WTC11 (cell line): ENCODE measurements at regions of chr4 and their contacts with region 1.

Region 1: DNA sequence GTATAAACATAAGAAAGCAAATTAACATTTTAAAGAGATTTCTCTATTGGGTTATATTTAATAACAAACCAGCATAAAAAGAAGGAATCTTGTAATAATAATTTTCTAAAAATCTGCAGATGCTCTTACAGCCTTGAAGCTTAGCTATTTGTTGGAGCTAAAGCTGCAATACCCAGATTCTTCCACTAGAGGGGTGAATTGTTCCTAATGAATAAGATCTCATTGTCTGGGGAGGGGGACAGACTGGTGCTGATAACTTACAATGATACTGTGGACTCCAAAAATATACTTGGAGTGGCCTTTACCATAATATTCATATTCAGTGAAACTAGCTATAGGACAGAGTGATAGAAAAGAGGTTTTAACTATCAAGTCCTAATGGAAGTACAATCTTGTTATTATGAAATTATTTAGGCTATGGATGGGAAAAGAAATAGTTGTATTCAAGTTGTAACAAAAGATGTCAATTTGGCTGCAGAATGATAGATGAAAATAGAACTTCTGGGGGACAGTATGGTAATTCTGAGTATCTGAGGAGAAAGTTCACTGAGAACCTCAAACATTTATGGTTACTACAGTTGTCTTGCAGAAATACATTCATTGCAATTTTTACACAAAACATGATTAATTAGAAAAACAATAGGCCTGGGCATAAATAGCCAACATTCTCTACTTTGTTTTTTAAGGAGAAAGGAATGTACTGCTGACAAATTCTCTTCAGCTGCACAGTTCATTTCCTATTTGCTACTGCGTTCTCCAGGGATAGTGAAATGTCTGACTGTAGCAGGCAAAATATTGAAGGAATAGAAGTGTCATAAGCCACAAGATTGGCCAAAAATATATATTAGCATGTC is 443.3 kb downstream of the GBA3 start:
- DNase-seq: no peak
- ATAC-seq: peak; percentile 82
- H3K4me3 Mint-ChIP-seq: no peak overlapping the region
- H3K27ac Mint-ChIP-seq: no peak overlapping the region
- H3K4me1 Mint-ChIP-seq: peaks cover 21% of the 10 kb centered on the region
- H3K27me3 Mint-ChIP-seq: no peaks in the 10 kb centered on the region
- CTCF ChIP-seq: peak; percentile 77

Region 2: GRCh38 chr4:22941688-22942375 is 194.2 kb before region 1 on chr4:
- CTCF ChIA-PET with region 1: no interaction called
- POLR2A ChIA-PET with region 1: no interaction called
- DNase-seq: no peak
- ATAC-seq: no peak
- H3K4me3 Mint-ChIP-seq: no peak overlapping the region
- H3K27ac Mint-ChIP-seq: no peak overlapping the region
- H3K4me1 Mint-ChIP-seq: peaks cover 27% of the 10 kb centered on the region
- H3K27me3 Mint-ChIP-seq: peaks cover 86% of the 10 kb centered on the region
- CTCF ChIP-seq: no peak

Region 3: GRCh38 chr4:23163647-23164436 is 27.8 kb after region 1 on chr4:
- CTCF ChIA-PET with region 1: interaction called, 15 read pairs
- POLR2A ChIA-PET with region 1: no interaction called
- DNase-seq: no peak
- ATAC-seq: peak; percentile 66
- H3K4me3 Mint-ChIP-seq: no peak overlapping the region
- H3K27ac Mint-ChIP-seq: no peak overlapping the region
- H3K4me1 Mint-ChIP-seq: peaks cover 36% of the 10 kb centered on the region
- H3K27me3 Mint-ChIP-seq: peaks cover 20% of the 10 kb centered on the region
- CTCF ChIP-seq: no peak